Sciatic nerve (tissue), 2 donors: ENCODE measurements at regions of chr6 and their contacts with region 1.

Region 1: DNA sequence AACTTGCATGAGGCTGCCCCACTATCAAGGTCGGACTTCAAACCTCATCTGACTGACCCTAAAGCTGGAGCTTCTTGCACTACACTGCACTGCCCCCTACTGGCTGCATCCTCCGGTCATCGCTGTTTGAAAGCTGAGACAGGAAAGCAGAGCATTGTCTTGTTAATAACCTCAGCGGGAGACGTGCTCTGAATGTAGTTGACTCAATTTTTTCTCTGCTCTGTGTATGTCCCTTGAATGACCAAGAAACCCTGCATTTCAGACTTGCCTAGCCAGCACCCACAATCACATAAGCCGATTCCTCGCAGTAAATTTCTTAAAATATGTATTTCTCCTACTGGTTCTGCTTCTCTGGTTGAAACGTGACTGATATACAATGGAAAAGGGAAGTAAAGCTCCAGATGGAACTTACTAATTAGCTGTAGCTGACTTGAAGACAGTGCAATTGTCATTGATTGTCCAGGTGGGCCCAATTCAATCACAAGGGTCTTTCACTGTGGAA is 27.8 kb downstream of the TCF21 start:
- DNase-seq: peak; percentile 95
- ATAC-seq: peak; percentile 90

Region 2: DNA sequence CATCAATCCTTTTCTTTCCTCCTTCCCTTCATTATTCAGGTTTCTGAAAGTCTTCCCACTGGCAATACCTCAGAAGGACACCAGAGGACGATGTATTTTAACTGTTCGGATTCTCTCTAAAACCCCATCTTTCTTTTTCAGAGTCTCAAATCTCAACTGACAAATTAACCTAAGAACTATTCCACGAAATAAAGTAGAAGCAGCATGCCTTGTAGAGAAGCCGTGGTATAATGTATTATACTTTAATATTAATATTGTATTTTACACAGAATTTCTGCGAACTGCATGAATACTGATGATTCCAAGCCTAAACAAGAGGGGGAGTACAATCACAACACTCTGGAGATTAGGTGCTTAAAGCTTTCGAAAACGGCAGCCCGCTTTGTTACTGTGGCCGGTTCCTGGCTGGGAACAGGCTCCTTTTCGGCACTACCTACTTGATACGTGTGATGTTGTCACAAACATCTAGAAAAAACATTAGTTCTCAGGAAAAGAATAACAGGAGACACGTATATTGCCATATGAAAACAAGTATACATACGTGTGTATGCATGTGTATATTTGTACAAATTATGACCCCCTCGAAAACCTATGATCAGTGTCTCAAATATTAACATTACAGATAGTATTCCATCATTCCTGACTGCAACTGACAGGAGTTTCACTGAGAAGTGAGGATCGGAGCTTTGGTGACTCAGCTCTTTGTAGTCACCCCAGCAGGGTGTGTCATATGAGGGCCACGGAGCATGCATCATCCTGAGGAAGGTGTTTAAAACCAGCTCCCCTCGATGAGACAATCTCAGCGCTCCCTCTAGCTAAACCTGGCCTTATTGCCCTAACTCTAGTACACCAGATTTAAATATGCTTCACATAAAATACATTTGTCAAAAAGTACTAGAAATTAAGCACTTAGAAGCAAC is 347.5 kb before region 1 on chr6:
- intact Hi-C with region 1: loop called (anchors 10 kb)
- DNase-seq: peak; percentile 50
- ATAC-seq: peak; percentile 86